Activated naive CD4-positive, alpha-beta T cell treated with anti-CD3 and anti-CD28 coated beads for 36 hours (primary cell): ENCODE measurements at regions of chr14 and their contacts with region 1.

Region 1: DNA sequence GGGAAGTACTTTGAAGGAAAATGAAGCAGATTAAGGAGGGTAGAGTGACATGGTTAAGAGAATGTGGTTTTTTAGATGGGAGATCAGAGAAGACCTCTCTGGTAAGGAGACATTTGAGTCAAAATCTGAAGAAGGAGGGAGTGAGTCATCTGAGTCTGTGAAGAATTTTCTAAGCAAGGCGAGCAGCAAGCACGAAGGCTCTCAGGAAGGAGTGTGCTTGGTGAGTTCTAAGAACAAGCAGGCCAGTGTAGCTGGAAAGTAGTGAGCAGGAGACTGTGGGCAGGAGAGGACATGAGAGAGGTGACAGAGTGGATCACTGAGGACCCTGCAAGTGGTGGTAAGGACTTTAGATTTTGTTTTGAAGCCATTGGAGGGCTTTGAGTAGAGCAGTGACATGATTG is 76.3 kb upstream of the FUT8 start:
- DNase-seq: peak; percentile 77
- H3K4me3 Mint-ChIP-seq: peak overlapping the region; percentile 72
- H3K27ac Mint-ChIP-seq: peak overlapping the region; percentile 93
- H3K4me1 Mint-ChIP-seq: peaks cover 55% of the 10 kb centered on the region
- H3K27me3 Mint-ChIP-seq: no peaks in the 10 kb centered on the region

Region 2: DNA sequence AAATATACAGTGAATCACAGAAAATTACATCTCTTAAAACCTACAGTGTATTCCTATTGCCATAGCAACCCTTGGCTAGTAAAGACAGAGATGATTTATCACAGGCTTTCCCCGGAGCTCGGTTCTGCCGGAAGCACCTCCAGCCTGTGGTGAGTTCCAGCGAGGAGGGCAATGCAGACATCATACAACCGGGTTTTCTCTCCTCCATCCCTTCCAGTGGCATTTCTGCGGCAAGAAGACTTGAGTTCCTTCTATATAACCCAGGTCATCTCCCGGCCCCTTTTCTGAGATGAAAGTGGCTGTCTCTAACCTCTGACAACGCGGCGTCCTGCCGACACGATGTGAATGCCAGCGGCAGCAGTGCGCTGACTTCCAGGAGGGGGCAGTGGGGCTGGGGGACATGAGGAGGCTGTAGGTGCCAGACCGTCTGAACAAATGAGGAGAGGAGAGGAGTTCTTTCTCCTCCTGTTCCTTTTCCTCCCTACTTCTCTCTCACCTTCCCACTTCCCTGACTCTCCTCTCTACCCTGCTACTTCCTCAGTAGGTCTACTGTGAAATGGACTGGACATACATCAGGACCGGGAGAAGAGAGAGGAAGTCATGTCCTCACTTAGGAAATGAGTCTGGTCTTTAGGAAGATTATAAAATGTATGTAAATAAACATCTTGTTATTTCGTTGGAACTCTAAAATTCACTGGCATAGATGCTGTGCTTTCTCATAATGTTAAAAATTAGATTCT is 165.3 kb before region 1 on chr14:
- CTCF ChIA-PET with region 1: no interaction called
- intact Hi-C with region 1: loop called (anchors 2 kb)
- DNase-seq: peak; percentile 78
- H3K4me3 Mint-ChIP-seq: peak overlapping the region; percentile 67
- H3K27ac Mint-ChIP-seq: no peak overlapping the region
- H3K4me1 Mint-ChIP-seq: peaks cover 15% of the 10 kb centered on the region
- H3K27me3 Mint-ChIP-seq: peaks cover 4% of the 10 kb centered on the region

Region 3: GRCh38 chr14:65287264-65288131 is 48.7 kb before region 1 on chr14:
- CTCF ChIA-PET with region 1: interaction called, 4 read pairs
- intact Hi-C with region 1: loop called (anchors 1 kb)
- DNase-seq: peak; percentile 66
- H3K4me3 Mint-ChIP-seq: peak overlapping the region; percentile 74
- H3K27ac Mint-ChIP-seq: peak overlapping the region; percentile 98
- H3K4me1 Mint-ChIP-seq: peaks cover 64% of the 10 kb centered on the region
- H3K27me3 Mint-ChIP-seq: no peaks in the 10 kb centered on the region

Region 4: DNA sequence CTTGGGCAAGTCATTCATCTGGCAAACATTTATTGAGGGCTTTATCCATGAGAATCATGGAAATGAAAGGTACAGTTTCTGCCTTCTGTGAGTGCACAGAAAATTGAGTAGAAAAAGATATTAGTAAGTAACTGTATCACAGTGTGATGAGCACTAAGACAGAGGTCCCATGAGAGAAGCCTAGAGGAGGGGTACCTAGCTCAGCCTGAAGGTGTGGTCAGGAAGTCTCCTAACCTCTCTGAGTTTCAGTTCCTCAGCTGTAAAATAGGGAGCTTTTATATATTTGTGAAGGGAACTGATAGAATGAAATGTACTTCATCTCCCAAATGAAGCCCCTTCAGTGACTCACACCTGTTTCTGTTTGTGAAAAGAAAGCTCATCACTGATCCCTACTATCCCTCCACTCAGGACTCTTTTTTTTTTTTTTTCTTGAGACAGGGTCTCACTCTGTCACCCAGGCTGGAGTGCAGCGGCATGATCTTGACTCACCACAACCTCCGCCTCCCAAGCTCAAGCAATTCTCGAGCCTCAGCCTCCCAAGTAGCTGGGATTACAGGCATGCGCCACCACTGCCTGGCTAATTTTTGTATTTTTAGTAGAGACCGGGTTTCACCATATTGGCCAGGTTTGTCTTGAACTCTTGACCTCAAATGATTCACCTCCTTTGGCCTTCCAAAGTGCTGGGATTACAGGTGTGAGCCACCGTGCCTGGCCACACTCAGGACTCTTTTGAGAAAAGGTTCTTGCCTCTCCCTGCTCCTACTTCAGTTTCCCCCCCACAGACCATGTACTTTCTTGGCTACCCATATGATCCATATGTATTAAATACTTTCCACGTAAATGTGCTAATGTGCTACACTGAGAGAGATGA is 17.3 kb before region 1 on chr14:
- CTCF ChIA-PET with region 1: no interaction called
- intact Hi-C with region 1: no loop called
- DNase-seq: no peak
- H3K4me3 Mint-ChIP-seq: no peak overlapping the region
- H3K27ac Mint-ChIP-seq: no peak overlapping the region
- H3K4me1 Mint-ChIP-seq: peaks cover 42% of the 10 kb centered on the region
- H3K27me3 Mint-ChIP-seq: no peaks in the 10 kb centered on the region

Region 5: GRCh38 chr14:65356327-65356852 is 20.2 kb after region 1 on chr14:
- CTCF ChIA-PET with region 1: no interaction called
- intact Hi-C with region 1: loop called (anchors 1 kb)
- DNase-seq: peak; percentile 77
- H3K4me3 Mint-ChIP-seq: no peak overlapping the region
- H3K27ac Mint-ChIP-seq: peak overlapping the region; percentile 63
- H3K4me1 Mint-ChIP-seq: peaks cover 44% of the 10 kb centered on the region
- H3K27me3 Mint-ChIP-seq: no peaks in the 10 kb centered on the region

Region 6: DNA sequence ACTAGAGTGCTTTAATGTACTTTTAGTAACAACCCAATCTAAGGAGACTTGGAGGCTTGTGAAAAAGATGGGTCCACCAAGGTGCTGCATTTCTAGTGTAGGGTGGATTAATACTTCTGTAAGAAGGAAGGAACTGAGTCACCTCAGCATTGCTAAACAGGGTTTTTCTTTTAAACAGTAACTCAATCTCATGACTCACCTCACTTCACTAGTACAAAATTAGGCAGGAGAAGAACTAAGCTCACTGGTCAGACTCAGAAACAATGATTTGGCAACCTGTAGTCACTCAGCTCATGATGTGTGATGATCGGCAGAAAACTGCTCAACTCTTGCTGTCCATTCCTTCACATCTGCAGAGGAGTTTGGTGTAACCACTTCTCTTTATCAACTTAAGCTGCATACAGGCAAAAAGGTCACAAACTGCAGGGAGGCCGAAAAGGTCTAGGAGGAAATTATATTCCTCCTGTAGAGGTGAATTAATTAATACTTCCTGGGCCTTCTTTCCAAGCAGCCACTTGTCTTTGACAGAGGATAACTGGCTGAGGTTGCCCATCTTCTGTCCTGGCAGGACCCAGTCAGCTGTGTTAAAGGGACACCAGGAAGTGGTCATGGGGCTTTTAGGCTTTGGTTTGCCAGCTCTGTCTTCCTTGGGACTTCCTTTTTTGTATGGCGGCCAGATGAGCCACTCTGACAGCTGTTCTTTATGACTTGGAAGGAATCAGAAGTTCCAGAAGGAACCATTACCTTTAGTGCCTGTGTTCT is 543.2 kb after region 1 on chr14:
- CTCF ChIA-PET with region 1: no interaction called
- intact Hi-C with region 1: loop called (anchors 1 kb)
- DNase-seq: peak; percentile 18
- H3K4me3 Mint-ChIP-seq: no peak overlapping the region
- H3K27ac Mint-ChIP-seq: peak overlapping the region; percentile 48
- H3K4me1 Mint-ChIP-seq: peaks cover 31% of the 10 kb centered on the region
- H3K27me3 Mint-ChIP-seq: no peaks in the 10 kb centered on the region